Endothelial cell of umbilical vein (primary cell): ENCODE measurements at regions of chr13 and their contacts with region 1.

Region 1: GRCh38 chr13:26929971-26930730 is 169.6 kb upstream of the GPR12 start:
- DNase-seq: peak; percentile 67
- H3K4me3 ChIP-seq: no peak overlapping the region
- H3K27ac ChIP-seq: no peak overlapping the region
- H3K4me1 ChIP-seq: no peaks in the 10 kb centered on the region
- H3K27me3 ChIP-seq: peaks cover 3% of the 10 kb centered on the region in 2 experiments
- CTCF ChIP-seq: peak; percentile 89 to 95
- POLR2A ChIP-seq: no peak

Region 2: DNA sequence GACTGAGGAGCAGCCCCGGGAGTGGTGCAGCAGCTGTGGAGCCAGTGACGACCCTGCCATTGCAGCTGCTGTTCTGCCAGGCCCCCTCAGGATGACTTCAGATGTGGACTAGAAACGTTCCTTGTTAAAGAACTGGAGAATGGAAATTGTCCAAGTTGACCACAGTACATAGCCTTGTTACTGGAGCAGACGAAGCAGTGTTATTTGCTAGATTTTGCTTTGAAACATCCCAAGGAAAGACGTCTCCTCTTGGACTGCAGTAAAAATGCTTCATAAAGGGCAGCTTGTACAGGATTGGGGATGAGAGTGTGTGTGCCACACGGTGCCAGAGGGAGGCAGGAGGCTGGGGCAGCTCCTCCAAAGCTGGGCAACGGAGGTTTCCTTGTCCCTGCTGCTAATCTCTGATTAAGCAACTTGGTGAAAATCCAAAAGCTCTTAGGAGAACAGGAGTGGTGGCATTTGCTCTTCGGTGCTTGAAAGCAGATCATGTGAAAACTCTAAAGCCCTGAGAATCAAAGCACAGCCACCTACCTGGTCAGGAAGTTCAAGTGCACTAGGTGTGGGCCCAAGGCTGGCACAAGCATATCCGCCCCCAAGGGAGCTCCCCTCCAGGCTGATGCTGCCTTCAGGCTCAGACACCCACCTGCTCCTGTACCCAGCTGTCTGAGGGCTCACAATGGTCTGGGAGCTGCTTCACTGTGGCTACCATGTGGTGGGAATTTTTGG is 912.8 kb before region 1 on chr13:
- CTCF ChIA-PET with region 1: no interaction called
- POLR2A ChIA-PET with region 1: interaction called, 10 read pairs
- dilution Hi-C with region 1: no loop called
- intact Hi-C with region 1: no loop called
- DNase-seq: no peak
- H3K4me3 ChIP-seq: no peak overlapping the region
- H3K27ac ChIP-seq: peak overlapping the region; percentile 89
- H3K4me1 ChIP-seq: peaks cover 81% of the 10 kb centered on the region
- H3K27me3 ChIP-seq: no peaks in the 10 kb centered on the region
- CTCF ChIP-seq: no peak
- POLR2A ChIP-seq: no peak

Region 3: GRCh38 chr13:26707122-26708006 is 222.8 kb before region 1 on chr13:
- CTCF ChIA-PET with region 1: interaction called, 10 read pairs
- POLR2A ChIA-PET with region 1: no interaction called
- dilution Hi-C with region 1: no loop called
- intact Hi-C with region 1: loop called (anchors 1 kb)
- DNase-seq: peak; percentile 41
- H3K4me3 ChIP-seq: no peak overlapping the region
- H3K27ac ChIP-seq: no peak overlapping the region
- H3K4me1 ChIP-seq: no peaks in the 10 kb centered on the region
- H3K27me3 ChIP-seq: peaks cover 0 to 8% of the 10 kb centered on the region in 2 experiments
- CTCF ChIP-seq: peak; percentile 29 to 60
- POLR2A ChIP-seq: no peak

Region 4: DNA sequence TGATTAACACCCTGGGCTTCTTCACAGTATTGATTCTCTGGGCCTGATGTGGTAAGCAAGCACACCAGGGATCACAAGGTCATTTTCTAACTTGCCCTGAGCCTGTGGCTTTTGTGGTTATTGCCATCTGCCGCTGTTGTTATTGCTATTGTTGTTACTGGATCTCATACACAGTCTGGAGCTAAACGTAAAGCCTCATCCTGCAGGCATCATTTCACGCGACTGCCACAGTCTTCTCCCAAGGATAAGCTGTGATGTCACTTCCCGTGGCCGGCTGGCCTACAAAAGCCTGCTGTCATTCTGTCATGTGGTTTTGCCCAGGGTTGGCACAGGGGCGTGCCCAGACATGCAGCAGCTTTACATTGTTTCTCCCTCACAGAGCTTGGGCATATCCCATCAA is 15.5 kb before region 1 on chr13:
- CTCF ChIA-PET with region 1: interaction called, 18 read pairs
- POLR2A ChIA-PET with region 1: no interaction called
- dilution Hi-C with region 1: no loop called
- intact Hi-C with region 1: no loop called
- DNase-seq: no peak
- H3K4me3 ChIP-seq: no peak overlapping the region
- H3K27ac ChIP-seq: no peak overlapping the region
- H3K4me1 ChIP-seq: no peaks in the 10 kb centered on the region
- H3K27me3 ChIP-seq: no peaks in the 10 kb centered on the region
- CTCF ChIP-seq: no peak
- POLR2A ChIP-seq: no peak

Region 5: DNA sequence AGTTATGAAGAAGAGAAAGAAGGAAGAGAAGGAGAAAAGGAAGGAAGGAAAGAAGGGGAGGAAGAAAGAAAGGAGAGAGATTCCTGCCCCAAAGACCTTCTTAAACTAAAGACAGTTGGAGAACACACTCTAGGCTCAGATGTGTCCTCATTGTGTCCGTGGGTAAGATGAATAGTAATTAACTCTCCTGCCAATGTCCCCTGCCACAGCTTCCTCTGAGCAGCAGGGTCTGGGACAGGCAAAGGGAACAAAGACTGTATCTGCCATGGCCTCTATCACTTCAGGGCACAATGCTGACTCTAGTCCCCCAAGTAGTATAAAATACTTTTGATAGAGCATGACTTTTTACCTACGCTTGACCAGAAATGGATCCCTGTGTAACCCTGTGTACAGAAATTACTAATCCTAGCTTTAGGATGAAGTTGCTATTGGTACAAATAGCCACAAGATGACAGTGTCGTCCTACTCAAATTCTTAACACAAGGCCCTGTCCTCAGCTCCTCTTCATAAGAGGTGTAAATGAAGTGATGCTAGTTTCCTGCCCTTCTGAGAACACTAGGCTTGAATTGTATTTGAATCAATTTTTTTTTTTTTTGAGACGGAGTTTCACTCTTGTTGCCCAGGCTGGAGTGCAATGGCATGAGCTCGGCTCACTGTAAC is 16.7 kb after region 1 on chr13:
- CTCF ChIA-PET with region 1: interaction called, 10 read pairs
- POLR2A ChIA-PET with region 1: no interaction called
- dilution Hi-C with region 1: no loop called
- intact Hi-C with region 1: no loop called
- DNase-seq: peak; percentile 39
- H3K4me3 ChIP-seq: no peak overlapping the region
- H3K27ac ChIP-seq: no peak overlapping the region
- H3K4me1 ChIP-seq: no peaks in the 10 kb centered on the region
- H3K27me3 ChIP-seq: peaks cover 10 to 12% of the 10 kb centered on the region in 2 experiments
- CTCF ChIP-seq: peak; percentile 34 to 52
- POLR2A ChIP-seq: no peak

Region 6: DNA sequence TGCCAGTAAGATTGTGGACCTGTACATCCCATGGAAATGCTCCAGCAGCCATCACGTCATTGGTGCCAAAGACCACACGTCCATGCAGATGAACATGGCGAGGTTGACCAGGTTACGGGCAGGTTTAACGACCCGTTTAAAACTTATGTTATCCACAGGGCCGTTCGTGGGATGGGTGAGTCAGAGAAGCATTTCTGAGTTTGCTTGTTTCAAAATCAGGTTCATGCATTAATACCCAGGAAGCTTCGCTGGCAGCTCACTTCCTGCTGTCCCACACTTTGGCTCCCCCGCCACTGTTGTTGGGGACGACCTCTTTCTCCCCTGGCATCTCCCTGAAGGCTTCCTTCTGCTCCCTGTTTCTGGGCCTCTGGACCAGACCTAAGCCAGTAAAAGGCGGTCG is 47.4 kb after region 1 on chr13:
- CTCF ChIA-PET with region 1: no interaction called
- POLR2A ChIA-PET with region 1: no interaction called
- dilution Hi-C with region 1: no loop called
- intact Hi-C with region 1: no loop called
- DNase-seq: no peak
- H3K4me3 ChIP-seq: no peak overlapping the region
- H3K27ac ChIP-seq: no peak overlapping the region
- H3K4me1 ChIP-seq: no peaks in the 10 kb centered on the region
- H3K27me3 ChIP-seq: no peaks in the 10 kb centered on the region
- CTCF ChIP-seq: no peak
- POLR2A ChIP-seq: no peak